CD4-positive, alpha-beta T cell (primary cell): ENCODE measurements at regions of chr5 and their contacts with region 1.

Region 1: DNA sequence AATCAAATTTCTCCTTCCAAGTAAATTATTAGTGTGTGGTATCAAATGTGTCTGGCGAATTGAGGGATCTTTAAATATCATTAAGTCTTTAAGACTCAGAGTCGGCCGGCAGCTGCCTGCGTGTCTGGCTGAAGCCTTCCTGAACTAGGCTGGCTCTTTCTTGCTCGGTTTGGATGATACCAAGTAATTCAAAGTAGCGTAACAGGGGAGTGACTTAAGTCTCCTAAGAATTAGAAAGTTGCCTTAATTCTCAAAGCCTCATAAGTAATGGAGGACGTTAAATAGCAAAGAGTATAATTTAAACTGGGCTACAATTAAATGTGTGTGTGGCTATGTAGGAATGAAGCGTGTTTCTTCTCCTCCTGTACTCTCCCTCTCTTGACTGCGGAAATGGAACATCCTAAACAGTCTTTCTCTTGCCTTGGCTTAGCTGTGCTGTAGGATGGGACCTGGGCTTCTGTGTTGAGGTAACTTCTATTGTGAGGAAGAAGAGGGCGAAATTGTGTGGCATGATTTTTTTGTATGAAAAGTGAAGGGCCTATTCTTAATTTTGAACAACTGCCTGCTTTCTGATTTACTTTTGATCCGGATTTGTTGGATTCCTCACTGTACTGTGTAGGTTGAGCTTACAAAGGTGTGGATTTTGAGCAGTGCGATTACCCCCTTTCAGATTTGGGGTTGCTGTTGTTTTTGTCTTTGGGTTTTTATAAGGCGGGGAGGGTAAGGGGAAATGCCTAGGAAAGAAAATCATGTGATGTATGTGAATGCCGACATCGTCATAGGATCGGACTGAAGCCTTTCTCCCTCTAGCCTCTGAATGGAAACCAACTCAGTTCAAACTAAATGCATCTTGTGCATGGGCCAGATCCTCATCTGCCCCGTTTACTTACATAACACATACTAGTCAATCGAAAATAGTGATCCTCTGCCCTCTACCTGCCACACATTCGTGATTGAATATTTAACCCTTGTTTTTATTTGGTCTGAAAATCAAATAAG is 29.9 kb downstream of the CPEB4 start:
- DNase-seq: peak; percentile 34 to 87 (median 54)
- ATAC-seq: peak; percentile 91
- H3K4me3 ChIP-seq: peak overlapping the region; percentile 62
- H3K4me3 Mint-ChIP-seq: no peak overlapping the region
- H3K27ac ChIP-seq: peak overlapping the region; percentile 78 to 80
- H3K27ac Mint-ChIP-seq: no peak overlapping the region
- H3K4me1 ChIP-seq: peaks cover 7% of the 10 kb centered on the region
- H3K4me1 Mint-ChIP-seq: peaks cover 22% of the 10 kb centered on the region
- H3K27me3 ChIP-seq: no peaks in the 10 kb centered on the region
- H3K27me3 Mint-ChIP-seq: no peaks in the 10 kb centered on the region
- CTCF ChIP-seq: no peak

Region 2: GRCh38 chr5:173887610-173888472 is 30.2 kb before region 1 on chr5 and contains the start of gene CPEB4:
- CTCF ChIA-PET with region 1: no interaction called
- POLR2A ChIA-PET with region 1: interaction called, 107 read pairs
- intact Hi-C with region 1: loop called (anchors 1 kb)
- DNase-seq: peak; percentile 92 to 100 (median 96)
- ATAC-seq: peak; percentile 94
- H3K4me3 ChIP-seq: peak within 1 kb of the TSS; percentile 87
- H3K4me3 Mint-ChIP-seq: peak within 1 kb of the TSS; percentile 99
- H3K27ac ChIP-seq: peak within 1 kb of the TSS; percentile 77 to 89
- H3K27ac Mint-ChIP-seq: peak within 1 kb of the TSS; percentile 91
- H3K4me1 ChIP-seq: peaks cover 47% of the 10 kb centered on the region
- H3K4me1 Mint-ChIP-seq: peaks cover 90% of the 10 kb centered on the region
- H3K27me3 ChIP-seq: no peaks in the 10 kb centered on the region
- H3K27me3 Mint-ChIP-seq: no peaks in the 10 kb centered on the region
- CTCF ChIP-seq: no peak
- total RNA-seq, gene CPEB4: 18.3 to 19.2 TPM

Region 3: GRCh38 chr5:173907686-173908371 is 10.3 kb before region 1 on chr5:
- CTCF ChIA-PET with region 1: interaction called, 4 read pairs
- POLR2A ChIA-PET with region 1: interaction called, 20 read pairs
- intact Hi-C with region 1: no loop called
- DNase-seq: no peak
- ATAC-seq: no peak
- H3K4me3 ChIP-seq: no peak overlapping the region
- H3K4me3 Mint-ChIP-seq: no peak overlapping the region
- H3K27ac ChIP-seq: no peak overlapping the region
- H3K27ac Mint-ChIP-seq: no peak overlapping the region
- H3K4me1 ChIP-seq: no peaks in the 10 kb centered on the region
- H3K4me1 Mint-ChIP-seq: peaks cover 38% of the 10 kb centered on the region
- H3K27me3 ChIP-seq: no peaks in the 10 kb centered on the region
- H3K27me3 Mint-ChIP-seq: no peaks in the 10 kb centered on the region
- CTCF ChIP-seq: no peak

Region 4: DNA sequence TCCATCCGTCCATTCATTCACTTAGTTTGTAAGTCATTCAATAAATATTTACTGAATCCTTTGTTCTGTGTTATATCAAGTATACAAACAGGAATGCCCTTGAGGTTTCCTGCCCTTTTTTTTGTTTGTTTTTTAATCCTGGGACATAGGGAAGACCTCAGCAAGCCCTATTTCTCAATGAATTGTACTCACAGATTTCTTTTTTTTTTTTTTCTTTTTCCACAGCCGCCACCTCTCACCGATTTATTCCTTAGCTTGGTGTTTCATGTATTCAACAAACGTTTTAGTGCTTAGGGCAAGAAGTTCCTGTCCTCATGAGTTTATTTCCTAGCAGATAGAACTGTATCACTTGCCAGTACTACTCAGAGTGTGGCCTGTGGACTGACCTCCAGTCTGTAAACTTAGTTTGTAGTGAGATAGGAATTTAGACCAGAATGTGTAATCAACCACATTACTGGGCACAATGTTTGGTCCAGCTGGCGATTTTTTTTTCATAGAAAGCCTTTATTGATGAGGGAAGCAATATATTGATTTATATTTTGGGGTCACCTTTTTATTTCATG is 35.5 kb after region 1 on chr5:
- CTCF ChIA-PET with region 1: no interaction called
- POLR2A ChIA-PET with region 1: no interaction called
- intact Hi-C with region 1: no loop called
- DNase-seq: no peak
- ATAC-seq: no peak
- H3K4me3 ChIP-seq: no peak overlapping the region
- H3K4me3 Mint-ChIP-seq: no peak overlapping the region
- H3K27ac ChIP-seq: no peak overlapping the region
- H3K27ac Mint-ChIP-seq: no peak overlapping the region
- H3K4me1 ChIP-seq: no peaks in the 10 kb centered on the region
- H3K4me1 Mint-ChIP-seq: no peaks in the 10 kb centered on the region
- H3K27me3 ChIP-seq: no peaks in the 10 kb centered on the region
- H3K27me3 Mint-ChIP-seq: no peaks in the 10 kb centered on the region
- CTCF ChIP-seq: no peak